Astrocyte of the cerebellum (primary cell): ENCODE measurements at regions of chr6 and their contacts with region 1.

Region 1: GRCh38 chr6:149534742-149535141 is 11.1 kb downstream of the PPIL4 start:
- DNase-seq: no peak
- H3K4me3 ChIP-seq: no peak overlapping the region
- CTCF ChIP-seq: no peak

Region 2: GRCh38 chr6:149431905-149432775 is 102.6 kb before region 1 on chr6:
- in situ Hi-C with region 1: loop called (anchors 5 kb)
- DNase-seq: peak; percentile 60
- H3K4me3 ChIP-seq: no peak overlapping the region
- CTCF ChIP-seq: peak; percentile 87